CD4-positive, alpha-beta T cell (primary cell): ENCODE measurements at regions of chr15 and their contacts with region 1.

Region 1: DNA sequence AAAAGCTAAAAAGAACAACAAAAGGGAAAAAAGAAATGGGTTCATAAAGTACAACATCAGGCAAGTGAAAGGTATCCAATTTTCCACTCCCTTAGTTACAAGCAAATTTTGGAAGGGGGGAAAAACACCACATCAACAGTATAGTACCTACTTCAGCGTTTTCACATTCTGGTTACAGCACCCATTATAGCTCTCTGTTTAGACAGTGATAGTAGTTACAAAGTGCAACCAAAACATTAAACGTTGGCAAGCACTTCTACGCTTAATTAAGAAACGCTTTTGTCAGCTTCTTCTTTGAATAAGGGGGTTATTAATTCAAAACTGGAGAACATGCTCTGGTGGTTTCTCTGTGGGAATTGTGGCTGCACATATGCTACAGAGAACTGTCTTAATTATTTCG is 180.2 kb downstream of the VPS13C start:
- DNase-seq: no peak
- ATAC-seq: no peak
- H3K4me3 ChIP-seq: no peak overlapping the region
- H3K4me3 Mint-ChIP-seq: no peak overlapping the region
- H3K27ac ChIP-seq: no peak overlapping the region
- H3K27ac Mint-ChIP-seq: no peak overlapping the region
- H3K4me1 ChIP-seq: no peaks in the 10 kb centered on the region
- H3K4me1 Mint-ChIP-seq: no peaks in the 10 kb centered on the region
- H3K27me3 ChIP-seq: no peaks in the 10 kb centered on the region
- H3K27me3 Mint-ChIP-seq: no peaks in the 10 kb centered on the region
- CTCF ChIP-seq: no peak

Region 2: DNA sequence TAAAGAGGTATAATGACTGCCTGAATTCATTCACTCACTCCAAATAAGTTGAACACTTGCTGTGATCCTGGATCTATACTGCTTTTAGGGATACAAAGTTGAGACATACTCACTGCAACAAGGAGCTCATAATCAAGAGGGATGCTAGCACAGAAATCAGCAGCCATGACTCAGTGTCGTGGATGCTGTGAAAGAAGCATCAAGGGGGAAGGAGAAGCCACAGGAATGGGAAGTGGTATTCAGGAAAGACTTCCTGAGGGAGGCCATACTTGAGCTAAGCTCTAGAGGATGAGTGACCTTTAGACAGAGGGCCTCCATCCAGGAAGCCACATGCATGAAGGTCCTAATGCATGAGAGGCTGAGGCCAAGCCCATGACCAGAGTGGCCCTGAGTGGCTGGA is 405.3 kb before region 1 on chr15:
- CTCF ChIA-PET with region 1: no interaction called
- POLR2A ChIA-PET with region 1: no interaction called
- intact Hi-C with region 1: no loop called
- DNase-seq: no peak
- ATAC-seq: no peak
- H3K4me3 ChIP-seq: no peak overlapping the region
- H3K4me3 Mint-ChIP-seq: no peak overlapping the region
- H3K27ac ChIP-seq: no peak overlapping the region
- H3K27ac Mint-ChIP-seq: no peak overlapping the region
- H3K4me1 ChIP-seq: no peaks in the 10 kb centered on the region
- H3K4me1 Mint-ChIP-seq: no peaks in the 10 kb centered on the region
- H3K27me3 ChIP-seq: peaks cover 0 to under 1% of the 10 kb centered on the region in 2 experiments
- H3K27me3 Mint-ChIP-seq: peaks cover 30% of the 10 kb centered on the region
- CTCF ChIP-seq: no peak

Region 3: DNA sequence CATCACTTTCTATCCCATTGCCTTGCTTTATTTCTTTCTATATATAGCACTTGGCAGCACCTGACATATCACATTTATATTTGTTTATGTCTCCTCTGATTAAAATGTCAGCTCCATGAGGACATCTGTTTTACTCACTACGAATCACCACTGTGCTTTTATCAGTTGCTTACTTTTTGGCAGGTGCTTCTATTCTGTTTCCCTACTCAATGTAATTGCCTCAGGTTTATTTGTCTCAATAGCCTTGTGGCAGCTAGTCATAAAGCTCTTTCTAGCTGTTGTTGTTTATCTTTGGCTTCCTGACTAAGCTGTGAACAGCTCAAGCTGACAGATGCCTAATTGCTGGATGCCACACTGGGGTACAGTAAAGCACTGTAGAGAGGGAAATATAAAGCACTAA is 94.7 kb after region 1 on chr15:
- CTCF ChIA-PET with region 1: no interaction called
- POLR2A ChIA-PET with region 1: no interaction called
- intact Hi-C with region 1: loop called in 1 of 2 experiments (anchors 5 kb)
- DNase-seq: no peak
- ATAC-seq: no peak
- H3K4me3 ChIP-seq: no peak overlapping the region
- H3K4me3 Mint-ChIP-seq: no peak overlapping the region
- H3K27ac ChIP-seq: no peak overlapping the region
- H3K27ac Mint-ChIP-seq: no peak overlapping the region
- H3K4me1 ChIP-seq: no peaks in the 10 kb centered on the region
- H3K4me1 Mint-ChIP-seq: peaks cover 14% of the 10 kb centered on the region
- H3K27me3 ChIP-seq: no peaks in the 10 kb centered on the region
- H3K27me3 Mint-ChIP-seq: no peaks in the 10 kb centered on the region
- CTCF ChIP-seq: no peak